ENCODE measurements at regions of chr17 and their contacts with region 1.

Region 1: GRCh38 chr17:34562387-34562786 is 17.0 kb upstream of the TMEM132E start:
- DNase-seq: no peak
- ATAC-seq: no peak
- H3K4me3 ChIP-seq: no peak overlapping the region
- H3K27ac ChIP-seq: no peak overlapping the region
- H3K4me1 ChIP-seq: no peaks in the 10 kb centered on the region
- H3K27me3 ChIP-seq: no peaks in the 10 kb centered on the region
- CTCF ChIP-seq: no peak
- POLR2A ChIP-seq: no peak

Region 2: GRCh38 chr17:34474706-34475105 is 87.7 kb before region 1 on chr17:
- in situ Hi-C with region 1: loop called in 1 of 4 experiments (anchors 25 kb)
- intact Hi-C with region 1: no loop called
- DNase-seq: no peak
- ATAC-seq: no peak
- H3K4me3 ChIP-seq: no peak overlapping the region
- H3K27ac ChIP-seq: no peak overlapping the region
- H3K4me1 ChIP-seq: no peaks in the 10 kb centered on the region
- H3K27me3 ChIP-seq: no peaks in the 10 kb centered on the region
- CTCF ChIP-seq: no peak
- POLR2A ChIP-seq: no peak